Activated CD4-positive, alpha-beta T cell treated with anti-CD3 and anti-CD28 coated beads for 36 hours (primary cell): ENCODE measurements at regions of chrX and their contacts with region 1.

Region 1: GRCh38 chrX:107627838-107628661 is at the start of gene PRPS1:
- DNase-seq: peak; percentile 93
- ATAC-seq: peak; percentile 99
- H3K4me3 Mint-ChIP-seq: peak within 1 kb of the TSS; percentile 89
- H3K27ac Mint-ChIP-seq: peak within 1 kb of the TSS; percentile 93
- H3K4me1 Mint-ChIP-seq: peaks cover 27% of the 10 kb centered on the region
- H3K27me3 Mint-ChIP-seq: no peaks in the 10 kb centered on the region
- total RNA-seq, gene PRPS1: 112 to 141 TPM

Region 2: DNA sequence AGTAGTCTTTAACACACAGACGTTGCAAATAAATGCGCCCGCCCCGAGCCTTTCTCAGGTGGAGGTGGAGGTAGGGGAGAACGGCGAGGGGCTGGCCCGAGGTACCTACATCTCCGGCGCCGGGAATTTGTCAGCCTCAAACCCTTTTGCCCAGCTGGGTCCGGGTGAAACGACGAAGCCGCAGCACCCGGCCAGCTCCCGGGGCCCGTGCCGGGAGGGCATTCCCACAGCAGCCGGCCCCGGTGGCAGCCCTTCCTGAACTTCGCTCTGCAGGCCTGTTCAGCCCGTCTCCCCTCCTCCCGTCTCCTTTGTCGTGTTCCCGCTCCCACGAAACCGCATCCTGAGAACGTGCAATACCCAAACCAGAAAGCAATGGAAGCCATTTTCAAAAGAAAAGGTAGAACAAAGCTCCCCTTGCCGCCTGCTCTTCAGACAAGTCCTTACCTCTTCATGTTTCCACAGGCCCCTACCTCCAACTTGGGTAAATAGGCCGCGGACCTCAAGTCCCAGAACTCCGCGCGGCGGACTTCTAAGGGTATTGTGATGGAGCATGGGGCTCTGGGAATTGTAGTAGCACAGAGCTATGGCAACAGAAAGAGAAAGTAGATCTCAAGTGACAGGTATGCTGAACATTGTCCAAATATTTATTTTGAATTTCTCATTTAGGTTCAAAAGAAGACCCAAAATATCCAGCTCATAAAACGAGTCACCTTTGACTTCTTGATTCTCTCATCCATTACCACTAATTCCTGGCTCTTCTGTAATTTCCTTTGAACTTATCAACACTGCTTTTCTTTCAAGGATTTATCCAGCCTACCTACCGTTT is 509.5 kb before region 1 on chrX and contains the start of gene RBM41:
- CTCF ChIA-PET with region 1: no interaction called
- POLR2A ChIA-PET with region 1: no interaction called
- intact Hi-C with region 1: loop called in 1 of 2 experiments (anchors 5 kb)
- DNase-seq: peak; percentile 81
- ATAC-seq: peak; percentile 99
- H3K4me3 Mint-ChIP-seq: peak within 1 kb of the TSS; percentile 99
- H3K27ac Mint-ChIP-seq: peak within 1 kb of the TSS; percentile 98
- H3K4me1 Mint-ChIP-seq: peaks cover 27% of the 10 kb centered on the region
- H3K27me3 Mint-ChIP-seq: no peaks in the 10 kb centered on the region
- total RNA-seq, gene RBM41: 12.0 to 12.2 TPM

Region 3: GRCh38 chrX:107205770-107206696 is 422.0 kb before region 1 on chrX and contains the starts of genes DNAAF6 and NUP62CL:
- CTCF ChIA-PET with region 1: no interaction called
- POLR2A ChIA-PET with region 1: no interaction called
- intact Hi-C with region 1: loop called in 1 of 2 experiments (anchors 10 kb)
- DNase-seq: peak; percentile 81
- ATAC-seq: peak; percentile 99
- H3K4me3 Mint-ChIP-seq: peak within 1 kb of the TSS; percentile 87
- H3K27ac Mint-ChIP-seq: peak within 1 kb of the TSS; percentile 73
- H3K4me1 Mint-ChIP-seq: peaks cover 2% of the 10 kb centered on the region
- H3K27me3 Mint-ChIP-seq: no peaks in the 10 kb centered on the region
- total RNA-seq, gene DNAAF6: not detected
- total RNA-seq, gene NUP62CL: 1.7 to 2.5 TPM

Region 4: DNA sequence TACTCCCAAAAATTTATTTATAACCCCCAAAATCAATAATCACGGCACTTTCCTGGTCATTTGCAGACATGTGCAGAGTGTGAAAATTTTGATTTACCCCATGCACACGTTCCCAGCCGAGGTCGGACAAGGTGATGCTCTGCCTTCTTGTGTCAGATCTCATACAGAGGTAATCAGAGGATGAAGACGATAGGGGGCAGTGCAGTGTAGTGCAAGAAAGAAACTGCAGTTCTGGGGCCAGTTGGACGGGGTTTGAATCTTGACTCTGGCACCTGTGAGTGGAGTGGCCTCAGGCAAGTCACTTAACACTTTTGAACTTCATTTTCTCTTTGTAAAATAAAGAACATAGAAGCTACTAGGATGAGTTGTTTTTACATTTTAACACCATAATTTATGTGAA is 90.2 kb before region 1 on chrX:
- CTCF ChIA-PET with region 1: no interaction called
- POLR2A ChIA-PET with region 1: no interaction called
- intact Hi-C with region 1: loop called (anchors 5 to 10 kb)
- DNase-seq: peak; percentile 60
- ATAC-seq: peak; percentile 70
- H3K4me3 Mint-ChIP-seq: no peak overlapping the region
- H3K27ac Mint-ChIP-seq: no peak overlapping the region
- H3K4me1 Mint-ChIP-seq: no peaks in the 10 kb centered on the region
- H3K27me3 Mint-ChIP-seq: peaks cover 3% of the 10 kb centered on the region

Region 5: DNA sequence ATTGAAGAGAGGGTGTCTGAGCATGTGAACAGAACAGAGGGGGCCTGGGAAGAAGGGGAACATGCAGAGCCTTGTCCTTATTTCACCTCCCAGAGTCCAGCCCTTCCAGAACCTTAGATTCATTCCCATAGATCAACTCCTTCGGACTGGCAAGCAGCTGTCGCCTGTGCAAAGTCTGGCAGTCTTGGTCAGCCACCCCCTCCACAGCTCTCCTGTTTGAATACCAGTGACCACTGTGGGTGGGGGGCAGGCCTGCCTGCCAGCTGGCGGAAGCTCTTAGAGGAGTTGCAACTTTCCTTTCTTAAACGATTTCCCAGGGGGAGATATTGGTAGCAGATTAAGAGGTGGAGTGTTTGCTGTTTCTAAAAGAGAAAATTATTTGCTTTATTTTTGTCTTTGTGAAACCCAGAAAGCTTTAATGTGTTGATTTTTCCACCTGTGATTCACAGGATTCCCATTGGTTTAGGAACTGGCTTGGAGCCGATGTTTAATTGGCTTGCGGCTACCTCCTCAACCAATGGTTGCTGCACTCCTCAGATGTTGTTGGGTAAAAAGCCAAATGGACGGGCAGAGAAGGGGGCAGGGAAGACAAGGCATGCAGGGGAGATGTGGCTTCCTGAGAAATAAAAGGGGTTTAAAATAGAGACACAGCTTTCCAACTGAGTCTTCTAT is 62.0 kb before region 1 on chrX:
- CTCF ChIA-PET with region 1: no interaction called
- POLR2A ChIA-PET with region 1: no interaction called
- intact Hi-C with region 1: no loop called
- DNase-seq: no peak
- ATAC-seq: no peak
- H3K4me3 Mint-ChIP-seq: no peak overlapping the region
- H3K27ac Mint-ChIP-seq: no peak overlapping the region
- H3K4me1 Mint-ChIP-seq: no peaks in the 10 kb centered on the region
- H3K27me3 Mint-ChIP-seq: peaks cover 3% of the 10 kb centered on the region

Region 6: DNA sequence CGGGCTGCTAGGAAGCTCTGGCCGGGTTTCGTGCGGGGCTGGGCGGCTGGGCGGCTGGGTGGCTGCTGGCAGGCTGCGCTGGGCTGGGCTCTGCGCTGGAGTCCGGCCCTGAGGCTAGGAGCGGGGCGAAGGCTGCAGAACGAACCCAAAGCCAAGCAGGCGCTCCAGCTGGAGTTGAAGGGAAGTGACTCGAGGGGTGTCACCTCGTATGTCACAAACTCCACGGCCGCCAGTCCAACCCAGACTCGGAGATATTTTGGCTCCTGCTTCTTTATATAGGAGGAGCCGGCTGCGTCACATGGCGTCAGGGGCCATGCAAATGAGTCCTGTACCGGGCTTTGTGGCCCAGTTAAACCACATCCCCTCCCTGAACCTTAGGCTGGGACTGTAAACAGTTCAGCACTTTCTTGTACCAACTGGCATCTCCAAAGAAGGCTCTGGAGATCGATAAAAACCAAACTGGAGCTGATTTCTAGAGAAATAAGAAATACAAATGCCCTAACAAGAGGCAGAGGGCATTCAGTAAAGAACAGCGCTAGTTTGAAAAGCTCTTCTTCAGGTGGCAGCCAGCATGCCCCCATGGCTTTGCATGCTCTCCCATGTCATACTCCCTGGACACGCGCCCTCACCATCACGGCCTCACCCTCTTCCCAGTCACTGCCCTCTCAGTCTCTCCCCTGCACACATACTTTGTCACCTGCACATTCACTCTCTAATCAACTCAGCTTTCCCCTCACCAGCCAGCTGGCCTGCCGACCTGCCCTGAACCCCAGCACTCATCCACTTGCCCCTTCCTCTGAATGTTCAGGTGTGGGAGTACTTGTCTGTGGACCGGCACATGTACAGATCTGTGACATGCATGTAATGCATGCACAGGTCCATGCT is 89.0 kb after region 1 on chrX:
- CTCF ChIA-PET with region 1: interaction called, 7 read pairs
- POLR2A ChIA-PET with region 1: interaction called, 6 read pairs
- intact Hi-C with region 1: loop called in 1 of 2 experiments (anchors 1 kb)
- DNase-seq: peak; percentile 88
- ATAC-seq: peak; percentile 88
- H3K4me3 Mint-ChIP-seq: peak overlapping the region; percentile 90
- H3K27ac Mint-ChIP-seq: peak overlapping the region; percentile 92
- H3K4me1 Mint-ChIP-seq: peaks cover 43% of the 10 kb centered on the region
- H3K27me3 Mint-ChIP-seq: no peaks in the 10 kb centered on the region